Motor neuron (in vitro differentiated cells): ENCODE measurements at regions of chr12 and their contacts with region 1.

Region 1: GRCh38 chr12:990661-991349 is at the start of gene ERC1:
- ATAC-seq: peak; percentile 75 to 88 (median 85)
- H3K4me3 ChIP-seq: peak within 1 kb of the TSS; percentile 58 to 91 (median 69)
- H3K27ac ChIP-seq: peak within 1 kb of the TSS; percentile 93 to 96
- H3K4me1 ChIP-seq: peaks cover 10 to 22% of the 10 kb centered on the region in 2 donors
- total RNA-seq, gene ERC1: 15.1 to 53.8 (median 34.6) TPM

Region 2: GRCh38 chr12:569803-570434 is 420.9 kb before region 1 on chr12:
- in situ Hi-C with region 1: no loop called
- ATAC-seq: peak; percentile 62 to 91 (median 84)
- H3K4me3 ChIP-seq: peak overlapping the region; percentile 36 to 45 (median 42)
- H3K27ac ChIP-seq: no peak overlapping the region
- H3K4me1 ChIP-seq: peaks cover 8 to 9% of the 10 kb centered on the region in 2 donors

Region 3: GRCh38 chr12:614411-614970 is 376.3 kb before region 1 on chr12:
- in situ Hi-C with region 1: no loop called
- ATAC-seq: peak in 5 of 8 experiments; percentile 26 to 90 (median 50)
- H3K4me3 ChIP-seq: no peak overlapping the region
- H3K27ac ChIP-seq: no peak overlapping the region
- H3K4me1 ChIP-seq: no peaks in the 10 kb centered on the region

Region 4: DNA sequence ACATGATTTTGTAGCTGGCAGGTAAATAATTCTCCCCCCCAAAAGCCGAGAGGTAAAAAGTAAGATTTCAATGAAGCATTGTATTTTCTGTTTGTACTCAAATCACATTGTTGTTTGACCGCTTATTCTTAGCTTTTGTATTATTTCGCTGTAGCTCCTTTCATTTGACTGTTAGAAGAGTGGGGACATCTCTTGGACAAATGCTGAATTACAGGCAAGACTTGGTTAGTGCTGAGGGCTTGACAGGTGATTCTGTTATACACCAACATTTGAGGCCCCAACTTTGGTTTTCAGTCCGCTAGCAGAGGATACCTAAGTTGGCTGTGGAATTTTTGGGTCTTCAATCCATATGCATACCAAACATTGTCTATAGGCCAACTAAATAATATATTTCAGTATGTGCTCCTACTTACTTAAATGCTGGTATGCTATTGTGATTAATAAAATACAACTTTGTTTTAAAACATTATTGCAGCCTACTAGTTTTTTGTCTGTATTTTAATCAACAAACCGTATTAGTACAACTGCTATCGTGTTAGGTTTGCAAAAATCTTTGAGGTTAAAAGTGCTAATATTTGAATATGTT is 102.5 kb after region 1 on chr12:
- in situ Hi-C with region 1: loop called in 1 of 9 experiments (anchors 25 kb)
- ATAC-seq: peak in 6 of 8 experiments; percentile 39 to 85 (median 64)
- H3K4me3 ChIP-seq: no peak overlapping the region
- H3K27ac ChIP-seq: no peak overlapping the region
- H3K4me1 ChIP-seq: peaks cover 0 to 3% of the 10 kb centered on the region in 2 donors

Region 5: DNA sequence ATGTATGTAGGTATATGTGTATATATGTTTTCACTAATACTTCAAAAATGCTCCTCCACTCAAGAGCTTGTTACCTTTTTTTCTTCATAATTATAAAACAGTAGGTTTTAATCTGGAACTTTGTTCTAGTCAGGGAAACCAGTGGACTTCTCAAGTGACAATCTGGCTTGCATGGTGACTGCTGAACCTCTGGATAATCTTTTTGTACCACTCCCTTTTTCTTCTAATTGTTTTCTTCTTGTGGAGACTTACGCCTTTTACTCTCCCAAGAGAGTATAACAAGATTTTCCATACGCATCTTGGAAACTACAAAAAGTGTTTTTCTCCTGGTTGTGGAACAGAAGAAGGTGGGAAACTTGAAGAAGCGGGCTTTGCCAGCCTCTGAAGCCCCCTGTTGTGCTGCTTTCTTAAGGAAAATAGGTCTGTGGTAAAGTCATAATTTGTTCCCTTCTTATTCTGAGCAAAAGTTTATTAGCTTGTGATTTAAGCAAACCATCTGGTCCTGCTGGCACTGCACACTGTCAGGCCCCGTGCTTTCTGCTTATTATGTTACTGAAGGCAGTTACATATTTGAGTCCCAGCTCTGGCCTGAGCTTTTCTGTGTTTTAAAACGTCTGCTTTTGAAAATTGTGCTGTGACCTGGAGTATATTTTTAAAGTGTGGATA is 292.0 kb after region 1 on chr12:
- in situ Hi-C with region 1: no loop called
- ATAC-seq: peak in 3 of 8 experiments; percentile 52 to 67 (median 59)
- H3K4me3 ChIP-seq: no peak overlapping the region
- H3K27ac ChIP-seq: no peak overlapping the region
- H3K4me1 ChIP-seq: peaks cover 0 to 5% of the 10 kb centered on the region in 2 donors

Region 6: DNA sequence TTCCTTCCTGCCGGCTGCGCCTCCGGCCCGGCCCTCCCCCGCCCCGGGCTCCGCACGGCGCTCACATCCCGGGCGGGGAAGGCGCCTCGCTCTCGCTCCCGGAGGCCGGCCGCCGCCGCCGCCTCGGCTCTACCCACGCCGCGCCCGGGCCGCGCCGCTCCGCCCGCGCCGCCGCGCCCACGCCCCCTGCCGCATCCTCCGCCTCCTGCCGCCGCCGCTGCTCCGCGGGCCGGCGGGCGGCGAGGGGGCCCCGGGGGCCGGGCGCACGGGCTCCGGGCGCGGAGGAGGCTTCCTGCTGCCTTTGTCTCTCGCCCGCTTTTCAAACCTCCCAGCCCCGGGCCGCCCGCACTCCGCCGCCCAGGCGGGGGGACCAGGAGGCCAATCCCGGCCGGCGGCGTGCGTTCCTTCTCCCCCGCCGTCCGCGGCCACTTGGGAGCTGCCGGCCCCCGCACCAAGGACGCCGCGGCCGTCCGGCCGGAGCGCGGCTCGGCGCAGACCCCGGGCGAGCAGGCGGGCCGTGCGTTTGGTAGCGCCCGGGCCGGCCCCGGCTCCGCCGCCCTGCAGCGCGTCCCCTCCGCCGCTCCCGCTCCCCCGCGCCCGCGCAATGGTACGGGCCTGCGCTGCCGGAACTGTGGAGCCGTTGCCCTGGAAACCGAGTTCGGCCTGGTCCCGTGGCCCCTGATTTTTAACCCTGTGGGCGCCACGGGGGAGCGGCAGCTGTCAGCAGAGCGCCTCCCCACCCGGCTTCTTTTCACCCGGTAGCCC is 603.6 kb after region 1 on chr12 and contains the start of gene FBXL14:
- in situ Hi-C with region 1: loop called in 1 of 9 experiments (anchors 25 kb)
- ATAC-seq: peak; percentile 69 to 79 (median 74)
- H3K4me3 ChIP-seq: peak within 1 kb of the TSS; percentile 55 to 98 (median 68)
- H3K27ac ChIP-seq: peak within 1 kb of the TSS; percentile 96 to 97
- H3K4me1 ChIP-seq: peaks cover 11 to 19% of the 10 kb centered on the region in 2 donors
- total RNA-seq, gene FBXL14: 5.6 to 25.6 (median 10.0) TPM